Activated T-helper 1 cell treated with anti-CD3 and anti-CD28 coated beads, Interleukin-12 subunit alpha, Interleukin-12 subunit beta, Interleukin-2, Interleukin-4 antibody, amounts not matched to agents 30 ng/mL and 10 ng/mL and 1 ng/mL, durations not matched to agents 14 hours and 24 hours and 36 hours (primary cell): ENCODE measurements at regions of chr11 and their contacts with region 1.

Region 1: DNA sequence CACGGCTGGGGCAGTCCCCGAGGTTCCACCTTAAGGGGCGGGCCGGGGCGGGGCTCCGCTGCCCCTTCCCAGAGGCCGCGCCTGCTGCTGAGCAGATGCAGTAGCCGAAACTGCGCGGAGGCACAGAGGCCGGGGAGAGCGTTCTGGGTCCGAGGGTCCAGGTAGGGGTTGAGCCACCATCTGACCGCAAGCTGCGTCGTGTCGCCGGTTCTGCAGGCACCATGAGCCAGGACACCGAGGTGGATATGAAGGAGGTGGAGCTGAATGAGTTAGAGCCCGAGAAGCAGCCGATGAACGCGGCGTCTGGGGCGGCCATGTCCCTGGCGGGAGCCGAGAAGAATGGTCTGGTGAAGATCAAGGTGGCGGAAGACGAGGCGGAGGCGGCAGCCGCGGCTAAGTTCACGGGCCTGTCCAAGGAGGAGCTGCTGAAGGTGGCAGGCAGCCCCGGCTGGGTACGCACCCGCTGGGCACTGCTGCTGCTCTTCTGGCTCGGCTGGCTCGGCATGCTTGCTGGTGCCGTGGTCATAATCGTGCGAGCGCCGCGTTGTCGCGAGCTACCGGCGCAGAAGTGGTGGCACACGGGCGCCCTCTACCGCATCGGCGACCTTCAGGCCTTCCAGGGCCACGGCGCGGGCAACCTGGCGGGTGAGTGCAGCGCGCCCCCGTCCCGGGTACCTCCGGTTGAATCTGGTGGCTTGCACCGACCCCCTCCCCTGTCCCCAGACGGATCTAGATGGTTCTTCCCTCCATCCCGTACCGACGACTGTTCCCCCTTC is at the start of gene SLC3A2:
- DNase-seq: peak; percentile 83
- H3K4me3 Mint-ChIP-seq: peak within 1 kb of the TSS; percentile 99
- H3K27ac Mint-ChIP-seq: peak within 1 kb of the TSS; percentile 100
- H3K4me1 Mint-ChIP-seq: peaks cover 52% of the 10 kb centered on the region
- H3K27me3 Mint-ChIP-seq: peaks cover 2% of the 10 kb centered on the region
- total RNA-seq, gene SLC3A2: 397 and 399 TPM in 2 replicates

Region 2: DNA sequence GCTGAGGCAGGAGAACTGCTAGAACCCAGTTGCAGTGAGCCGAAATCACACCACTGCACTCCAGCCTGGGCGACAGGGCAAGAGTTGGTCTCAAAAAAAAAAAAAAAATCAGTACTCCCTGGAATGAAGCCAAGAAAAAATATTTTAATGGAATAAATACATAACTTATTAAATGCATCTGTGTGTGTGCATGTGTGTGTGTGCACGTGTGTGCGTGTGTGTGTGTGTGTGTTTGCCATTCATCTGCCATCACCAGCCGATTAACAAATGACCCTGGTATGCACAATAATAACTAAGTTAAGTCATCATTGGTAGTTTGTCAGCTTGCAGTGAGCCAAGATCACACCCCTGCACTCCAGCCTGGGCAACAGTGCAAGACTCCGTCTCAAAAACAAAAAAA is 497.2 kb before region 1 on chr11:
- intact Hi-C with region 1: no loop called
- DNase-seq: no peak
- H3K4me3 Mint-ChIP-seq: no peak overlapping the region
- H3K27ac Mint-ChIP-seq: no peak overlapping the region
- H3K4me1 Mint-ChIP-seq: peaks cover 19% of the 10 kb centered on the region
- H3K27me3 Mint-ChIP-seq: peaks cover 10% of the 10 kb centered on the region

Region 3: GRCh38 chr11:62427630-62428233 is 453.3 kb before region 1 on chr11:
- intact Hi-C with region 1: loop called (anchors 5 kb)
- DNase-seq: peak; percentile 7
- H3K4me3 Mint-ChIP-seq: peak overlapping the region; percentile 55
- H3K27ac Mint-ChIP-seq: peak overlapping the region; percentile 96
- H3K4me1 Mint-ChIP-seq: peaks cover 46% of the 10 kb centered on the region
- H3K27me3 Mint-ChIP-seq: no peaks in the 10 kb centered on the region

Region 4: GRCh38 chr11:62601394-62602140 is 279.4 kb before region 1 on chr11 and contains the start of gene MTA2:
- intact Hi-C with region 1: loop called (anchors 2 kb)
- DNase-seq: peak; percentile 100
- H3K4me3 Mint-ChIP-seq: peak within 1 kb of the TSS; percentile 95
- H3K27ac Mint-ChIP-seq: peak within 1 kb of the TSS; percentile 92
- H3K4me1 Mint-ChIP-seq: peaks cover 54% of the 10 kb centered on the region
- H3K27me3 Mint-ChIP-seq: no peaks in the 10 kb centered on the region
- total RNA-seq, gene MTA2: 224 and 230 TPM in 2 replicates

Region 5: DNA sequence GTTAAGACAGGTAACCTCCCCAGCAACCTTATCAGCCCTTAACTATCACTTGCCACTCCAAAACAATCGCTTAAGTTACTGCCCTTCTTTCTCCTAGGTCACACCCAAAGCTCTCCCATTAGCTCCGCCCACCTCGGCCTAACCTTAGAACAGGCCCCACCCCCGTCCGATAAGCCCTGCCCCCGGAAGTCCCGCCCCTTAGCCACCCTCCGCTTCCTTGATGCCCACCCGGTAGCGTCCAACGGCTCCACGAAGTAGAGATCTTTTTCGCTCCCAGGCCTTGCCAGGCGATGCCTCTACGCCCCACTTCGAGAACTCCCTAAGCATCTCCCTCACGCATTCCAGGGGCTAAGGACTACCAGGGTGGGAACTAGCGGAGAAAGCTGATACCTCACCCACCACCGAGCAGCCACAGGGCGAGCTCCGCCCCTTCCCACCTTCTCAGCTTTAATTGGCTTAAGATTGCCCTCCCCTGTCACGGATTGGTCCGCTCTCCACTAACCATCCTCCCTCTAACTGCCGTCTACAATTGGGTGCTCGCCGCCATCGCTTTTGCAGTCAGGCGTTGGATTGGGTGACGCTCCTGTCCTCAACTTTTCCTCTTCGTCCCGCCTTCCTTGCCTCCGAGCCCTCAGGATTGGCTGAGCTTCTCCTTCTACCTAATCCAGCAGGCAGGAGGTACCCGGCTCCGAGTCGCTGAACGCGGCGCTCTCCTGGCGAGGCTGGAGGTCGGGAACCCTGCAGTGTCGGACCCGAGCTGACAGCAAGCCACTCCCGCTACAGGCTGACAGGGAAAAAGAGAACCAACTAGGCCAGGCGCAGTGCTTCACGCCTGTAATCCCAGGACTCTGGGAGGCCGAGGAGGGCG is 127.0 kb before region 1 on chr11 and contains the start of gene ZBTB3:
- intact Hi-C with region 1: loop called (anchors 1 kb)
- DNase-seq: peak; percentile 95
- H3K4me3 Mint-ChIP-seq: peak within 1 kb of the TSS; percentile 89
- H3K27ac Mint-ChIP-seq: peak within 1 kb of the TSS; percentile 91
- H3K4me1 Mint-ChIP-seq: peaks cover 12% of the 10 kb centered on the region
- H3K27me3 Mint-ChIP-seq: no peaks in the 10 kb centered on the region
- total RNA-seq, gene ZBTB3: 8.7 and 9.1 TPM in 2 replicates

Region 6: GRCh38 chr11:62787005-62787759 is 93.8 kb before region 1 on chr11 and contains the start of gene TMEM179B:
- intact Hi-C with region 1: loop called (anchors 1 kb)
- DNase-seq: peak; percentile 96
- H3K4me3 Mint-ChIP-seq: peak within 1 kb of the TSS; percentile 95
- H3K27ac Mint-ChIP-seq: peak within 1 kb of the TSS; percentile 94
- H3K4me1 Mint-ChIP-seq: peaks cover 42% of the 10 kb centered on the region
- H3K27me3 Mint-ChIP-seq: no peaks in the 10 kb centered on the region
- total RNA-seq, gene TMEM179B: 40.6 and 43.0 TPM in 2 replicates

Region 7: DNA sequence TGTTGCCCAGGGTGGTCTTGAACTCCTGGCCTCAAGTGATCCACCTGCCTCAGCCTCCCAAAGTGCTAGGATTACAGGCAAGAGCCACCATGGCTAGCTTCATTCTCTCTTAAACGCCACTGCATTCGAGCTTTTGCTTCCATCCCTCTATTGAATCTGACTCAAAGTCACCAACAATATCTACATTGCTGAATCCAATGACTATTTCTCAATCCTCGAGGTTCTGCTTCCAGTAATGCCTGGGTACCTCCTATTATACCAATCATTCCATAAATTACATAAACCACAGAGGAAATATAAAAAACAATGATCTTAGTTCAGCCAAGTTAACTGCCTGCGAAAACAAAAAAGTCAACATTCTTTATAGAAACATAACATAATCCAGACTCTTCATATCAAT is 63.9 kb before region 1 on chr11:
- intact Hi-C with region 1: no loop called
- DNase-seq: no peak
- H3K4me3 Mint-ChIP-seq: no peak overlapping the region
- H3K27ac Mint-ChIP-seq: no peak overlapping the region
- H3K4me1 Mint-ChIP-seq: no peaks in the 10 kb centered on the region
- H3K27me3 Mint-ChIP-seq: no peaks in the 10 kb centered on the region

Region 8: GRCh38 chr11:62831520-62832335 is 49.3 kb before region 1 on chr11 and contains the start of gene STX5:
- intact Hi-C with region 1: loop called (anchors 1 kb)
- DNase-seq: peak; percentile 99
- H3K4me3 Mint-ChIP-seq: peak within 1 kb of the TSS; percentile 93
- H3K27ac Mint-ChIP-seq: peak within 1 kb of the TSS; percentile 99
- H3K4me1 Mint-ChIP-seq: peaks cover 41% of the 10 kb centered on the region
- H3K27me3 Mint-ChIP-seq: no peaks in the 10 kb centered on the region
- total RNA-seq, gene STX5: 34.2 and 39.9 TPM in 2 replicates

Region 9: DNA sequence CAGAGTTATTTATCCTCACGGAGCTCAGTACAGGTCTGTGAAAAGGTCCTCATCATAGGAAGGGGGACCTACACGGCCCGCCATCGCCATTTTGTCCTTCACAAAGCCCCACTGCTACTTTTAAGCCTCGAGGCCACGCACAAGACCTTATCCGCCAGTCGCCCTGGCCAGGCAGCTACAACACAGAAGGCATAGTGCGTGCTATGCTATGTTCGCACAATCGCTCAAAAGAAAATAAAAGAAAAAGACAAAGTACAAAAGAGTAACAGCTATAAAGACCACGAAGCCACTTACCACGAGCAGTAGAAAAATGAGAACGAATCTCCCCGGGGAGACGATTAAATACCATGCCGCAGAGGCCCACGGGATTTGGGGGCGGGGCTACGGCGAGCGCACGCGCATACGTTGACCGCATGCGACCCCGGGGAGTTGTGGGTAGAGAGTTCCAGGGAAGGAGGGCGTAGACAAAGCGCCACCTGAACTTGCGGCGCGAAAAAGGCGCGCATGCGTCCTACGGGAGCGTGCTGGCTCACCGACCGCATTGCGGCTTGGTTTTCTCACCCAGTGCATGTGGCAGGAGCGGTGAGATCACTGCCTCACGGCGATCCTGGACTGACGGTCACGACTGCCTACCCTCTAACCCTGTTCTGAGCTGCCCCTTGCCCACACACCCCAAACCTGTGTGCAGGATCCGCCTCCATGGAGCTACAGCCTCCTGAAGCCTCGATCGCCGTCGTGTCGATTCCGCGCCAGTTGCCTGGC is 25.2 kb before region 1 on chr11:
- intact Hi-C with region 1: loop called (anchors 1 kb)
- DNase-seq: peak; percentile 99
- H3K4me3 Mint-ChIP-seq: peak overlapping the region; percentile 98
- H3K27ac Mint-ChIP-seq: peak overlapping the region; percentile 98
- H3K4me1 Mint-ChIP-seq: peaks cover 71% of the 10 kb centered on the region
- H3K27me3 Mint-ChIP-seq: peaks cover 5% of the 10 kb centered on the region

Region 10: DNA sequence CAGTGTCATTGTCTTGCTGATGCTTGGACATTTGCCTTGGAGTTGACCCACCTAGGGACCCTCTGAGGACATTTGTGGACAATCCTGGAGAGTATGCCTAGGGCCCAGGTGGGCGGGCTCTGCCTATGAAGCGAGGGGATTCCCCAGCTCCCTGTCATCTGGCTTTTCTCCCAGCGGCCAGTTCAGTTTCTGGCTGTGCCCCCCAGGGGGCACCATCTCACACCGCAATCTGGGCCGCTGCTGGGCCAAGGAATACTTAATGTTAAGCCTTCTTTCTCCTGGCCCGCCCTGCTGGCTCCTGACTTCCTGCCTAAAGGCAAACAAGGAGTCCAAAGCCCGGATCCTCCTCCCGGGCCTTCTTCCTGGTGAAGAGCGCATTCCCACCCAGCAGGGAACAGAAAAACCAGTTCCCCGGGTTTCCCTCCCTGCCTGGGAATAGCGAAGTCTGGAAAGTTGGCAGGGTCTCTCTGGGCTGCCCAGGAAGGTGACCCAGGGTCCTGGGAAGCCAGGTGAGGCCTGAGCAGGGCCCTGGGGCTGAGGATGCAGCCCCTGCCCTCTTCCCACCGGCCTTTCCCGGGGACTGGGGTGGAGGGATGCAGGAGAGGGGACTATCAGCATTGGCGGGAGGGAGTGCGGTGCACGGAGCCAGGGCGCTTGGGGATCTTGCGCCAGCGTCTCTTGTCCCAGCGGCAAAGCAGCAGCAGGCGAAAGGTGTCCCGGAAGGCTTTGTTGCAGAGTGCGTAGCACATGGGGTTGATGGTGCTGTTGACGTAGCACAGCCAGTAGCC is 28.3 kb after region 1 on chr11:
- intact Hi-C with region 1: no loop called
- DNase-seq: no peak
- H3K4me3 Mint-ChIP-seq: no peak overlapping the region
- H3K27ac Mint-ChIP-seq: no peak overlapping the region
- H3K4me1 Mint-ChIP-seq: peaks cover 17% of the 10 kb centered on the region
- H3K27me3 Mint-ChIP-seq: peaks cover 8% of the 10 kb centered on the region